K562 (cell line): ENCODE measurements at regions of chr1 and their contacts with region 1.

Region 1: DNA sequence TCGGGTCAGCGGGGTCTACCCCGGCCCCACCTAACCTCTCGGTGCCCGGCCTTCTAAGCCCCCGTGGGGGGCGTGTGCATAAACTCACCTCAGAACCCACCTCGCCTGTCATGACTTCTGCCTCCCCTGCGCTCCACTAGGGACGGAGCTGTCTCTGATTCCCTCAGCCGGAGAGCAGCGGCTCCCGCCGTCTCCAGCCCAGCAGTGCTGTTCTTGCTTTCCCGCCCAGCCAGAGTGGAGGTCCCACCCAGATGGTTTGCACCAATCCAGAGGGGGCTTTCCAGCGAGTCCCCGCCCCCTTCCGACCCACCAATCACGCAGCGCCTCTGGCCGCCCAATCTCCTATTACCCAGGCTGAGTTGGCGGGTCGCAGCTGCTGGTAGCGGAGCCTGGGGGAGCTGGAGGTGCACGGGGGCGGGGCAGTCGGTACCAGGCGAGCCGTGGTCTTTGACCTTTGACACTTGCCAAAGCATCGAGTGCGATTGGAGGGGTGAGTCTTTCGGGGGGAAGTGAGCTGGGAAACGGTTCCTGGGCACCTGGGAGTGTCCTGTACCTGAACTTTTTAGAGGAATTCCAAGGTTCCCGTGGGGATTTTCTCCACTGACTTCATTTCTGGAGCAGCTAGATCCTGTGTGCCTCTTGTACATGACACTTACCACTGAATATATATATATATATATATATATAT is at the start of gene CLSPN:
- DNase-seq: peak; percentile 99 to 100 (median 99)
- ATAC-seq: peak; percentile 95
- H3K4me3 ChIP-seq: peak within 1 kb of the TSS; percentile 66
- H3K27ac ChIP-seq: peak within 1 kb of the TSS; percentile 89
- H3K4me1 ChIP-seq: peaks cover 2 to 28% of the 10 kb centered on the region in 2 experiments; a peak in 3 of 5 replicates
- H3K27me3 ChIP-seq: no peaks in the 10 kb centered on the region
- CTCF ChIP-seq: 0 out of 6 replicates have a peak, but pooled peaks of 1 of the 3 experiments have one; percentile 10
- EP300 ChIP-seq: no peak
- POLR2A ChIP-seq: peak; percentile 99
- RAD21 ChIP-seq: no peak
- polyA plus RNA-seq, gene CLSPN: 23.1 to 27.0 TPM

Region 2: DNA sequence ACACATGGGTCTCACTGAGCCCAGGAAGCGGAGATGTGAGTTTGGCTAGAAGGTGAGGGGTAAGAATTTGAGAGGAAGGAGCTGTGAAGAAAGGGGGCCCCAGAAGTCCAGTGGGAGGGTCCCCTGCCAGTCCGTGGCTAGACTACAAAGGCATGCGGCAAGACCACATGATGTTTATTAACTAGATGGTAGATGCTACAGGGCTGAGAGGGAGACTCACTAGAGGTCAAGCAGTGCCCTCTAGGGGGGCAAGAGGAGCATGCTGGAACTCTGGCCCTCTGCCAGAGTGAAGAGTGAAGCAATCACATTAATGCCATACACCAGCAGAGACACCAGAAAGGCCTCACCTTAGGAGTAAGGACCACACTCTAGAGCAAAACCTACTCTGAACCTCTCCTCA is 224.9 kb before region 1 on chr1:
- CTCF ChIA-PET with region 1: no interaction called
- POLR2A ChIA-PET with region 1: no interaction called
- in situ Hi-C with region 1: no loop called
- intact Hi-C with region 1: no loop called
- DNase-seq: peak; percentile 67 to 87 (median 79)
- ATAC-seq: peak; percentile 95
- H3K4me3 ChIP-seq: no peak overlapping the region
- H3K27ac ChIP-seq: no peak overlapping the region
- H3K4me1 ChIP-seq: no peaks in the 10 kb centered on the region; a peak in 1 of 5 replicates
- H3K27me3 ChIP-seq: no peaks in the 10 kb centered on the region
- CTCF ChIP-seq: peak; percentile 79 to 92 (median 84)
- EP300 ChIP-seq: no peak
- POLR2A ChIP-seq: no peak
- RAD21 ChIP-seq: peak; percentile 59 to 88

Region 3: DNA sequence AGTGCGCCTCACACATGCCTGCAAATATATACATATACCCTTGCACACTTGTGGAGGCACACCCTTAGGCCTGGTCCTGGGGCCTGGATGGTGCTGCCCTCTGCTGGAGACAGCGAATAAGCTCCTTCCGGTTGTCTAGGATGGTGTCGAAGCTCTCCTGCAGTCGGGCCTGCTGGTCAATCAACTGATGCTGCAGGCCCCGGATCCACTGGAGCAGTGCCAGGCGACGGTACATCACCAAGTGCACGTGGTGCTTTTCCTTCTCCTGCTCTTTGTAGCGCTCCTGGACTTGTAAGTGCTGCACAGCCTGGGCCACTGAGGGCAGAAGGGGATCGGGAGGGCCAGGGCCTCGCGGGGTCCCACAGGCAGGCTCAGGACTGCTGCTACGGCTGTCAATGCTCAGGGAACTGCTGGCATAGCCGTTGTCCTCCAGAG is 54.3 kb before region 1 on chr1:
- CTCF ChIA-PET with region 1: no interaction called
- POLR2A ChIA-PET with region 1: interaction called, 7 read pairs
- in situ Hi-C with region 1: no loop called
- intact Hi-C with region 1: loop called (anchors 2 kb)
- DNase-seq: peak; percentile 74 to 90 (median 82)
- ATAC-seq: peak; percentile 77
- H3K4me3 ChIP-seq: no peak overlapping the region
- H3K27ac ChIP-seq: no peak overlapping the region
- H3K4me1 ChIP-seq: peaks cover 19 to 23% of the 10 kb centered on the region in 2 experiments; a peak in 4 of 5 replicates
- H3K27me3 ChIP-seq: no peaks in the 10 kb centered on the region
- CTCF ChIP-seq: peak; percentile 92 to 98 (median 94)
- EP300 ChIP-seq: no peak
- POLR2A ChIP-seq: no peak
- RAD21 ChIP-seq: peak; percentile 79 to 90

Region 4: DNA sequence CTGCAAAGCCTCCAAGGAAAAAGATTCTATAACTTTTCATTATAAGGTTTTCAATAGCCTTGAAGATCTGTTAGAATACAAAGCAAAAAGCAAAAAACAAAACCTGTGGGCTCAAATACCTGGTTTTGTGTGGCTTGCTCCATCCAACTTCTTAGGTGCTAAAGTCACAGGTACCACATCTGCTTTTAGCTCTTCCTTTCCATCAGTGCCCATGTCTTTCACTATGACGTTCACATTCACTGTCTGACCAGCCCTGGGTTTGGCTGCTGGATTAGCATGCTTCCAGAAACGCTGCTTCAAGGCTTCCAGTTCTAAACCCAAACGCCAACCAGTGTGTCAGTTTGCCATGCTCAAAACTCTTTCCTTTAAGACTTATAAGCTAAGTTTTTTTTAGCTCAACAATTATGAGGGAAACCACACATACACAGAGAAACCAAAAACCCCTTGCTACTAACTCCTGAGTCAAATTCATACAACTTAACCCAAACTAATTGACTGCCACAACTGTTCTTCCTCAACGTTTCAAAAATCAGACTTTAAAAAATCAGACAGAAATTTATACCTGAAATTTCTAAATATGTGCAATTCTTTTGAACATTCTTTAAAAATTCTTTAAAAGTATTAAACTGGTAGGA is 16.2 kb before region 1 on chr1:
- CTCF ChIA-PET with region 1: no interaction called
- POLR2A ChIA-PET with region 1: interaction called, 30 read pairs
- in situ Hi-C with region 1: no loop called
- intact Hi-C with region 1: no loop called
- DNase-seq: no peak
- ATAC-seq: no peak
- H3K4me3 ChIP-seq: no peak overlapping the region
- H3K27ac ChIP-seq: no peak overlapping the region
- H3K4me1 ChIP-seq: no peaks in the 10 kb centered on the region
- H3K27me3 ChIP-seq: no peaks in the 10 kb centered on the region
- CTCF ChIP-seq: no peak
- EP300 ChIP-seq: no peak
- POLR2A ChIP-seq: no peak
- RAD21 ChIP-seq: no peak

Region 5: GRCh38 chr1:36034692-36035091 is 264.8 kb after region 1 on chr1:
- CTCF ChIA-PET with region 1: no interaction called
- POLR2A ChIA-PET with region 1: no interaction called
- in situ Hi-C with region 1: no loop called
- intact Hi-C with region 1: no loop called
- DNase-seq: peak in 2 of 4 experiments; percentile 12 to 16
- ATAC-seq: peak; percentile 75
- H3K4me3 ChIP-seq: no peak overlapping the region
- H3K27ac ChIP-seq: peak overlapping the region; percentile 62; the same call in 1 of the 3 replicates
- H3K4me1 ChIP-seq: peaks cover 0 to 9% of the 10 kb centered on the region in 2 experiments; a peak in 2 of 5 replicates
- H3K27me3 ChIP-seq: no peaks in the 10 kb centered on the region
- CTCF ChIP-seq: no peak
- EP300 ChIP-seq: no peak
- POLR2A ChIP-seq: no peak
- RAD21 ChIP-seq: no peak

Region 6: GRCh38 chr1:36099681-36100341 is 329.9 kb after region 1 on chr1:
- CTCF ChIA-PET with region 1: no interaction called
- POLR2A ChIA-PET with region 1: no interaction called
- in situ Hi-C with region 1: no loop called
- intact Hi-C with region 1: no loop called
- DNase-seq: peak; percentile 87 to 91 (median 88)
- ATAC-seq: peak; percentile 96
- H3K4me3 ChIP-seq: peak overlapping the region; percentile 20; the same call in 1 of the 2 replicates
- H3K27ac ChIP-seq: no peak overlapping the region; the same call in 2 of the 3 replicates
- H3K4me1 ChIP-seq: peaks cover 0 to 36% of the 10 kb centered on the region in 2 experiments; a peak in 3 of 5 replicates
- H3K27me3 ChIP-seq: no peaks in the 10 kb centered on the region
- CTCF ChIP-seq: peak; percentile 94 to 95 (median 95)
- EP300 ChIP-seq: no peak
- POLR2A ChIP-seq: no peak
- RAD21 ChIP-seq: peak; percentile 95

Region 7: DNA sequence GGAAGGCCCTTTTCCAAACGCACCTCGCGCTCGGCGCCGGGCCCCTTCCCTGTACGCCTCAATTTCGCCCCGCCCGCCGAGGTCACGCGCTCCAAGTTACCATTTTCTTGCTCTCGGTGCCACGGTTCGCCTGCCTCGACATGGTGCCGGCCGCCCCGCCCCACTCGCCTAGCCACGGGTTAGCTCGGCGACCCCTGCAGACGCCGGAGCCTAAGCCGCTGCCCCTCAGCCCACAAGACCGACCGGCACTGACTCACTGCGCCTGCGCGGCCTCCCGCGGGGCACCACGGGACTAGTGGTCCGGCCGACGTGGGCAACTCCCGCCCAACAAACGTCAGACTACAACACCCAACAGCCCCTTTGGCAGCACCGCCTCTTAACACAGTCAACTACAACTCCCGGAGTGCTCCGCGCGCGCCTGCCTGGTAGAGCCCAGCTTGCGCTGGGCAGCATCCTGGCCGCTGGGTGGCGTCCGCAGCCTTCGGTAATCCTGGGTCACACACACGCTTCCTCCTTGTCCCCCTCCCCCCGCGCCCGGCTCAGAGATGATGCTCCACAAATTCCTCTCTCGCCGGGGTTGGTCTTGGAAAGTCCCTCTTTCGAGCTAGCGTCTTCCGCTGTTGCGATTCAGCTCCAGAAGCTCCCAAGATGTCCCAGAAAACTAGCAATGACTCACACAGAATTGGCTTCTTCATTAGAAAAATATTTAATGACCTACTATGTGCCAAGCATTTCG is 379.5 kb after region 1 on chr1 and contains the start of gene TRAPPC3:
- CTCF ChIA-PET with region 1: no interaction called
- POLR2A ChIA-PET with region 1: no interaction called
- in situ Hi-C with region 1: no loop called
- intact Hi-C with region 1: no loop called
- DNase-seq: peak; percentile 98 to 100 (median 99)
- ATAC-seq: peak; percentile 95
- H3K4me3 ChIP-seq: peak within 1 kb of the TSS; percentile 69
- H3K27ac ChIP-seq: peak within 1 kb of the TSS; percentile 87
- H3K4me1 ChIP-seq: peaks cover 31 to 34% of the 10 kb centered on the region in 2 experiments
- H3K27me3 ChIP-seq: no peaks in the 10 kb centered on the region
- CTCF ChIP-seq: peak; percentile 97 to 99 (median 99)
- EP300 ChIP-seq: peak; percentile 43; the same call in 1 of the 2 replicates
- POLR2A ChIP-seq: peak; percentile 95
- RAD21 ChIP-seq: peak; percentile 99 to 100
- polyA plus RNA-seq, gene TRAPPC3: 20.6 to 41.8 TPM